Right ventricle myocardium inferior (tissue), 1 donor: ENCODE measurements at regions of chr12 and their contacts with region 1.

Region 1: GRCh38 chr12:53625946-53626701 is at the start of gene ATF7:
- DNase-seq: peak; percentile 99
- ATAC-seq: peak; percentile 98
- total RNA-seq, gene ATF7: 39.8 TPM

Region 2: DNA sequence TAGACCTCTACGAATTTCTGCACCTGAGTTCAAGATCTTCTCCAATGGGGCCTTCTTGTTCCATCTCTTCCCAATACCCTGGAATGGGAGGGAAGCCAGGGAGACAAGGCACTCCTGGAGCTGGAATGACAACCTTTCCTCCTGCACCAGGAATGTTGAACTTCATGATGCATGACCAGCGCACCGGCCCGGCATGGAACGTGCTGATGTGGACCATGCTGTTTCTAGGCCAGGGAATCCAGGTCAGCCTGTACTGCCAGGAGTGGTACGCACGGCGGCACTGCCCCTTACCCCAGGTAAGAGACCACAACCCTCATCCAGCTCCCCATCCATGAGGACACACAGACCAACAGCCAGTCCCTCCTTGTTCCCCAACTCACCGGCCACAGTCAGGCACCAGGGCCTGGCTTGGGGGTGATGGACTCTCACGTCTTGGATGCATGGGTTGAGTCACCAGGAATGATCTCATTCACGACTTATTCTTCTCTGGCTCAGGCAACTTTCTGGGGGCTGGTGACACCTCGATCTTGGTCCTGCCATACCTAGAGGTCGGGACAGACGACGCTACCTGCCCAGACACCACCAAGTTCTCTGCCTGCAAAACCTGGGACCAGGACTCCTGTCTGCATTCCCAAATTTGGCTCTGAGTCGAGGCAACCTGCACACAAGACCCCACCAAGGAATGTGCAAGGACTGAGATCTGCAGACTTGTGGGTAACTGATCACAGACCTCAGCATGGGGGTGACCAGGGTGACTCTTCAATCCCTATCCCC is 502.4 kb before region 1 on chr12:
- intact Hi-C with region 1: no loop called
- DNase-seq: no peak
- ATAC-seq: no peak

Region 3: GRCh38 chr12:53543539-53543938 is 82.6 kb before region 1 on chr12:
- intact Hi-C with region 1: loop called (anchors 1 kb)
- DNase-seq: no peak
- ATAC-seq: peak; percentile 87

Region 4: DNA sequence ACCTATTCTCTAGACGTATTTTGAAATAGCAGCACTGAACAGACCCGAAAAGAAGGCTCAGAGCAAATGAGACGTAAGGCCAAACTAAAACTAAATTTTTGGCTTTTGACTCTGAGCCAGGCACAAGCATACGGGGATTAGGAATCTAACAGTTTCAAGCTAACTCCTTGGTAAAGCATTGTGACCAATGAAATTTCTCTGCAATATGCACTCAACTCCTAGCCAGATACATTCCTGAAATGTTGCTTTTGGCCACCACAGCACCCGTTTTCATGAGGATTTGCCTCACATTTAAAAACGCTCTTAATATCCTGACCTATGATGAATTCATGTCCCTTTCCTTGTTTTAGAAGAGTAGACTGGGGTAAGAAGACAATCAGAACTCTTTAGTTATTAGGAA is 65.8 kb before region 1 on chr12:
- intact Hi-C with region 1: no loop called
- DNase-seq: no peak
- ATAC-seq: peak; percentile 64

Region 5: GRCh38 chr12:53591301-53592206 is 34.6 kb before region 1 on chr12:
- intact Hi-C with region 1: loop called (anchors 5 kb)
- DNase-seq: no peak
- ATAC-seq: peak; percentile 64

Region 6: GRCh38 chr12:53603804-53604203 is 22.3 kb before region 1 on chr12:
- intact Hi-C with region 1: no loop called
- DNase-seq: no peak
- ATAC-seq: no peak

Region 7: GRCh38 chr12:53659011-53659551 is 33.0 kb after region 1 on chr12:
- intact Hi-C with region 1: loop called (anchors 2 kb)
- DNase-seq: no peak
- ATAC-seq: peak; percentile 95